Right lobe of liver (tissue), 6 donors: ENCODE measurements at regions of chr6 and their contacts with region 1.

Region 1: DNA sequence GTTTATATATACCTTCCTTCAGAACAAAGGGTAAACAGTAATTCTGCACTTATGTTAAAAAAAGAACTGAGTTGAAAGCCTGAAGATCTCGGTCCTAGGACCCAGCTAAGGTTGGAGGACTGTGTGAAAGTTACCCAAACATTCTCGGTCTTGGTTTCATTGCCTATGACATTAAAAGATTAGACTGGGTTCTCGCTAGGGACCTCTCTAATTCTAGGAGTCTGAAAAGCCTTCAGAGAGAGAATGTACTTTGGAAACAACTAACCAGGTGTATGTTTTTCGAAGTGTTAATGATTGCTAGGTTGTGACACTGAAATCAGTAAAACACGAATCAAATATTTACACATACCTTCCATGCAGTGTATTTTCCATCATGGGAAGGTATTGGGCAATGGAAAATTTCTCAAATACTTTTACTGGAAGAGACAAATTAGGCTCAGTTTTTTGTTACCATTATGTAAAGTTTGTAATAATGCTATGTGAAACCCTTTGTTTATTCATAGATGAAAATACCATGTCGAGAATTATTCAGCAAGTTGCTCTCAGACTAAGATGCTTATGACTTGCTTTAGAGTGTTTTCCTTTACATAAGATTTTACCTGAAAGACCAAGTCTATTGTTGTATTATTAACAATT is 113.7 kb upstream of the LOC128125822 start:
- DNase-seq: no peak
- ATAC-seq: peak; percentile 86 to 94 (median 90)
- H3K4me3 ChIP-seq: no peak overlapping the region
- H3K27ac ChIP-seq: peak overlapping the region; percentile 85 to 96 (median 92)
- H3K4me1 ChIP-seq: peaks cover 0 to 32% (median 9%) of the 10 kb centered on the region in 4 donors
- H3K27me3 ChIP-seq: no peaks in the 10 kb centered on the region
- CTCF ChIP-seq: no peak
- POLR2A ChIP-seq: peak; percentile 86

Region 2: GRCh38 chr6:63352587-63353285 is 105.9 kb before region 1 on chr6:
- intact Hi-C with region 1: loop called in 1 of 2 experiments (anchors 10 kb)
- DNase-seq: peak in 1 of 3 donors; percentile 74
- ATAC-seq: peak; percentile 87 to 96 (median 90)
- H3K4me3 ChIP-seq: no peak overlapping the region
- H3K27ac ChIP-seq: peak overlapping the region; percentile 80 to 87 (median 82)
- H3K4me1 ChIP-seq: peaks cover 0 to 14% (median 8%) of the 10 kb centered on the region in 4 donors
- H3K27me3 ChIP-seq: no peaks in the 10 kb centered on the region
- CTCF ChIP-seq: peak; percentile 74 to 88 (median 86)
- POLR2A ChIP-seq: no peak

Region 3: DNA sequence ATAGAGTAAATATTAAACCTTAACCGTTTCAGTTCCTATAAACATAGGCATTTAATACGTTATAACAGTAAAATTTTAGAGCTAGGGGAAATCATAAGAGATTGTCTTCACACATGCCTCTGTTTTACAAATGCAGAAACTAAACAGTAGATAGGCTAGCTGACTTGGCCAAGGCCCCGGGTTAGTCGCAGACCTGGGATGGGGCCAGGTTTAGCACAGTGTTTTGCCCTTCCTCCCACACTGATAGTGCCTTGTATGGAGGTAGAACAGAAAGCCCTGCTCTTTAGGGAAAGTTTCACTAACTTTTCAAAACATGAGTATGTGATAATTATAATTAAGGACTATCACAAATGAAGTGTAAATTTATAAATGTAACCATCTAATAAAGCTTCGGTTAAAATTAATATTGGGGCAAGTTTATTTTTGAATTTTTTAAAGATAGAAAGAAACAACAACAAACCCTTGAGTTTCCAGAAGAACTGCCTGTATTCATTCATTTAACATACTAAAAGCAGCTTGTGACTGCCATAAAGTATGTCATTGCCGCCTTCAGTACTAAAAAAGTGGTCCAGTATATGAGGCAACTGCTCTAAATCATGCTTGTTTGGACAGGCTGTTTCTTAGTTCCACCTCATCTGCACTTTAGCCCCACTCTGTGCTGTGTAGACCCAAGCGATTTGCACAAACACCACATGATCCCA is 51.2 kb after region 1 on chr6:
- intact Hi-C with region 1: loop called in 1 of 2 experiments (anchors 10 kb)
- DNase-seq: peak; percentile 78 to 93 (median 84)
- ATAC-seq: peak; percentile 73 to 87 (median 76)
- H3K4me3 ChIP-seq: peak overlapping the region in 2 of 3 donors; percentile 2 to 5
- H3K27ac ChIP-seq: peak overlapping the region; percentile 69 to 95 (median 91)
- H3K4me1 ChIP-seq: peaks cover 0 to 48% (median 15%) of the 10 kb centered on the region in 4 donors
- H3K27me3 ChIP-seq: no peaks in the 10 kb centered on the region
- CTCF ChIP-seq: no peak
- POLR2A ChIP-seq: peak; percentile 48

Region 4: DNA sequence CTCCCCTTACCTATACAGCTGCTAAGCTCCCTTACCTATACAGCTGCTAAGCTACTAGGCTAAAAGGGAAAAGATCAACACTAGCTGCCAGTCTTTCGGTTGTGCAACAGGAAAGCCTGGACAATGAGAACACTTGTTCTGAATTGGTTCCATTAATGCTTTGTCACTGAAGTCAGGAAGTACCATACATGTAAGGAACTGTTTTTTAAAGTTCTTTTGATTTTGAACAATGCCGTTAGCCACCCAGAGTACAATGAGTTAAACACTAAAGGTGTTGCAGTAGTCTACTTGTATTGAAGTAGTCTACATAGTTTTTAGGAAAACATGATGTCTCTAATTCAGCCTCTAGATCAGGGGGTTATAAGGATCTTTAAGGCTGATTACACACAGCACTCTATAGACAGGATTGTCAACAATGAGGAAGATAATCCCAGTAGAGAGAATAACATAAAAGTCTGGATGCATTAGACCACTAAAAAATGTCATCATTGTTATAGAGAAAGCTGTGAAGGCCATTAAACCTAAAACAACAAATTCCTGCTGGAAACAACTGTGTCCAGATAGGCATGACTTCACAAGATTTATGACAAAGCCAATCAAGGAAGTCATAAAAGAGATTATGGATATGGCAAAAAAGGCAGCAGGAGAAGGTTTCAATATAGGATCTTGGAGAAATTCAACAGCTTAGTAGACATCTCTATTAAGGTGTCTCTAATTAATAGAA is 483.3 kb after region 1 on chr6:
- intact Hi-C with region 1: no loop called
- DNase-seq: no peak
- ATAC-seq: peak; percentile 65 to 92 (median 78)
- H3K4me3 ChIP-seq: no peak overlapping the region
- H3K27ac ChIP-seq: no peak overlapping the region
- H3K4me1 ChIP-seq: peaks cover 0 to 11% (median under 1%) of the 10 kb centered on the region in 4 donors
- H3K27me3 ChIP-seq: no peaks in the 10 kb centered on the region
- CTCF ChIP-seq: no peak
- POLR2A ChIP-seq: no peak